ENCODE measurements at regions of chr3 and their contacts with region 1.

Region 1: DNA sequence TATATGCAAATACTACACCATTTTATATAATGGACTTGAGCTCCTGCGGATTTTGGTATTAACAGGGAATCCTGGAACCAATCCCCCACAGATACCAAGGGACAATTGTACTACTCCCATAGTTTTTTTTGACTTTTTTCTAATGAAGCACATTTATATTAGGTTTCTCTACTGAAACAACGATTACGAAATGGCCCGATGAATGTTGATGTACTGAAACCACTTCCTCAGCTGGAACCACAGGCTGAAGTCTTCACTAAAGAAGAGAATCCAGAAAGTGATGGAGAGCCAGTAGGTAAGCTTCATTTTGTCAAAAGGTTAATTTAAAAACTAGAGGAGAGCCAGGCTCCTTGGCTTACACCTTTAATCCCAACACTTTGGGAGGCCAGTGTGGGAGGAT is 121.5 kb upstream of the LRRFIP2 start:
- DNase-seq: no peak
- ATAC-seq: no peak
- H3K4me3 ChIP-seq: no peak overlapping the region
- H3K4me3 Mint-ChIP-seq: no peak overlapping the region
- H3K27ac ChIP-seq: no peak overlapping the region
- H3K27ac Mint-ChIP-seq: peak overlapping the region; percentile 62
- H3K4me1 ChIP-seq: no peaks in the 10 kb centered on the region
- H3K4me1 Mint-ChIP-seq: peaks cover 2% of the 10 kb centered on the region
- H3K27me3 ChIP-seq: no peaks in the 10 kb centered on the region
- H3K27me3 Mint-ChIP-seq: no peaks in the 10 kb centered on the region
- CTCF ChIP-seq: no peak

Region 2: GRCh38 chr3:37330466-37330865 is 34.5 kb after region 1 on chr3:
- CTCF ChIA-PET with region 1: no interaction called
- POLR2A ChIA-PET with region 1: no interaction called
- intact Hi-C with region 1: loop called in 1 of 2 experiments (anchors 5 kb)
- DNase-seq: no peak
- ATAC-seq: no peak
- H3K4me3 ChIP-seq: no peak overlapping the region
- H3K4me3 Mint-ChIP-seq: no peak overlapping the region
- H3K27ac ChIP-seq: no peak overlapping the region
- H3K27ac Mint-ChIP-seq: peak overlapping the region; percentile 47
- H3K4me1 ChIP-seq: no peaks in the 10 kb centered on the region
- H3K4me1 Mint-ChIP-seq: peaks cover 2% of the 10 kb centered on the region
- H3K27me3 ChIP-seq: no peaks in the 10 kb centered on the region
- H3K27me3 Mint-ChIP-seq: no peaks in the 10 kb centered on the region
- CTCF ChIP-seq: no peak

Region 3: GRCh38 chr3:37700466-37701248 is 404.7 kb after region 1 on chr3:
- CTCF ChIA-PET with region 1: no interaction called
- POLR2A ChIA-PET with region 1: no interaction called
- intact Hi-C with region 1: no loop called
- DNase-seq: no peak
- ATAC-seq: no peak
- H3K4me3 ChIP-seq: no peak overlapping the region
- H3K4me3 Mint-ChIP-seq: no peak overlapping the region
- H3K27ac ChIP-seq: no peak overlapping the region
- H3K27ac Mint-ChIP-seq: no peak overlapping the region
- H3K4me1 ChIP-seq: no peaks in the 10 kb centered on the region
- H3K4me1 Mint-ChIP-seq: no peaks in the 10 kb centered on the region
- H3K27me3 ChIP-seq: no peaks in the 10 kb centered on the region
- H3K27me3 Mint-ChIP-seq: peaks cover 8% of the 10 kb centered on the region
- CTCF ChIP-seq: no peak

Measured in CD8-positive, alpha-beta T cell (primary cell).